Posterior vena cava (tissue), 2 donors: ENCODE measurements at regions of chr10 and their contacts with region 1.

Region 1: GRCh38 chr10:23478570-23478969 is 39.7 kb downstream of the OTUD1 start:
- DNase-seq: no peak

Region 2: DNA sequence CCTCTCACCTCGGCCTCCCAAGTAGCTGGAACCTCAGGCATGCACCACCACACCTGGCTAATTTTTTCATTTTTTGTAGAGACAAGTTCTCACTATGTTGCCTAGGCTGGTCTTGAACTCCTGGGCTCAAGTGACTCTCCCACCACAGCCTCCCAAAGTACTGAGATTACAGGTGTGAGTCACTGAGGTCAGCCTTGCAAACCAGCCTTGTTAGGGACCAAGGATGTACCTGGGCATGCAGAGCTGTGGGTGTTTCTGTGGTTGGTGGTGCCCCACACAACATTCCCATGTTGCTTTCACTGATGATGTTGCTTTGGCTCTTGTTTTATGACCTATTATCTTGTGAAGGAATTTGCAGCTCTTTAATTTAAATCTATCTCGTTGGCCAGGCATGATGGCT is 15.1 kb after region 1 on chr10:
- intact Hi-C with region 1: loop called in 1 of 2 experiments (anchors 1 kb)
- DNase-seq: no peak

Region 3: GRCh38 chr10:23516530-23516929 is 38.0 kb after region 1 on chr10:
- intact Hi-C with region 1: no loop called
- DNase-seq: no peak